Naive thymus-derived CD4-positive, alpha-beta T cell (primary cell): ENCODE measurements at regions of chr4 and their contacts with region 1.

Region 1: GRCh38 chr4:88533937-88534750 is 10.6 kb upstream of the PYURF start:
- DNase-seq: no peak
- ATAC-seq: no peak
- H3K4me3 ChIP-seq: no peak overlapping the region
- H3K4me3 Mint-ChIP-seq: no peak overlapping the region
- H3K27ac ChIP-seq: no peak overlapping the region
- H3K27ac Mint-ChIP-seq: no peak overlapping the region
- H3K4me1 ChIP-seq: no peaks in the 10 kb centered on the region
- H3K4me1 Mint-ChIP-seq: no peaks in the 10 kb centered on the region
- H3K27me3 ChIP-seq: no peaks in the 10 kb centered on the region
- H3K27me3 Mint-ChIP-seq: no peaks in the 10 kb centered on the region

Region 2: GRCh38 chr4:88429401-88429800 is 104.7 kb before region 1 on chr4:
- CTCF ChIA-PET with region 1: no interaction called
- POLR2A ChIA-PET with region 1: no interaction called
- intact Hi-C with region 1: no loop called
- DNase-seq: no peak
- ATAC-seq: no peak
- H3K4me3 ChIP-seq: no peak overlapping the region
- H3K4me3 Mint-ChIP-seq: no peak overlapping the region
- H3K27ac ChIP-seq: no peak overlapping the region
- H3K27ac Mint-ChIP-seq: peak overlapping the region in 1 of 9 donors; percentile 63
- H3K4me1 ChIP-seq: no peaks in the 10 kb centered on the region
- H3K4me1 Mint-ChIP-seq: peaks cover 0 to 6% (median 0%) of the 10 kb centered on the region in 7 donors
- H3K27me3 ChIP-seq: no peaks in the 10 kb centered on the region
- H3K27me3 Mint-ChIP-seq: no peaks in the 10 kb centered on the region

Region 3: DNA sequence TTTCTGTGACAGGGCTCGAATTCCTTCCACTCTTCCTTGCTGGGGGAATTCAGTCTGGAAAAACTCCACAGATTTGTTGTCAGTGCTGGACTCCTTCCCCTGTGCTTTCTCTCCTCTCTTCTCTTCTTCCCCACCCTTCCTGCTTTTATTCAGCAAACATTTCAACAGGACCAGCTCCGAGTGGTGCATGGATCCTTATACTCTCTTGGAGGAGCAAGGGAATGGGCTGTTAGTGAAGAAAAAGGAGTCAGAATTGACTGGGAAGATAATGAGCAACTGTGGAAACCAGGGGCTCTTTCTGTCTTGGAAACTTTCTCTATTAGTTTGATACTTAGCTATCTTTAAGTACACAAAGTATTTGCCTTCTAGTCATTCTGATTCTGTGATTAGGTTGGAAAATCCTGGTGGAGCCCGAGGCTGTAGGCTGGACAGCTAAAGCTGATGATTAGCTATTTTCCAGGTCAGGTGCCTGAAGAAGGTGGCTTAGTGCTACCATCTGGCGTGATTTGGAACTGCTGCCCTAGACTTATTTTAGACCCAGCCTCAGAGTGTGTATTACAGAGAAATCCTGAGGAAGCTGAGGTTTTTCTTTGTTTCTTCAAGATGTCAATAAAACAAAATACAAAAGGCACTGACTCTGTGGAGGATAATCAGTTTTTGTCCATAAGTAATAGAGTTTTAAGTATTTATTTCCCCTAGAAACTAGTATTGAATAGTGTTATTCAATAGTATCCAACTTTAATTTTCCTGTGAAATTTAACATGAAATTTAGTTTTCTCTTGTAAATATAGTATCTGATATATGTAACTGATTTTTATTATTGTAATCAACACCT is 125.1 kb after region 1 on chr4:
- CTCF ChIA-PET with region 1: interaction called, 37 read pairs
- POLR2A ChIA-PET with region 1: interaction called, 4 read pairs
- intact Hi-C with region 1: loop called (anchors 1 kb)
- DNase-seq: peak in 7 of 9 donors; percentile 23 to 53 (median 44)
- ATAC-seq: peak; percentile 75
- H3K4me3 ChIP-seq: no peak overlapping the region
- H3K4me3 Mint-ChIP-seq: no peak overlapping the region
- H3K27ac ChIP-seq: no peak overlapping the region
- H3K27ac Mint-ChIP-seq: peak overlapping the region in 6 of 9 donors; percentile 5 to 86 (median 41)
- H3K4me1 ChIP-seq: no peaks in the 10 kb centered on the region
- H3K4me1 Mint-ChIP-seq: peaks cover 8 to 39% (median 24%) of the 10 kb centered on the region in 7 donors
- H3K27me3 ChIP-seq: no peaks in the 10 kb centered on the region
- H3K27me3 Mint-ChIP-seq: no peaks in the 10 kb centered on the region

Region 4: DNA sequence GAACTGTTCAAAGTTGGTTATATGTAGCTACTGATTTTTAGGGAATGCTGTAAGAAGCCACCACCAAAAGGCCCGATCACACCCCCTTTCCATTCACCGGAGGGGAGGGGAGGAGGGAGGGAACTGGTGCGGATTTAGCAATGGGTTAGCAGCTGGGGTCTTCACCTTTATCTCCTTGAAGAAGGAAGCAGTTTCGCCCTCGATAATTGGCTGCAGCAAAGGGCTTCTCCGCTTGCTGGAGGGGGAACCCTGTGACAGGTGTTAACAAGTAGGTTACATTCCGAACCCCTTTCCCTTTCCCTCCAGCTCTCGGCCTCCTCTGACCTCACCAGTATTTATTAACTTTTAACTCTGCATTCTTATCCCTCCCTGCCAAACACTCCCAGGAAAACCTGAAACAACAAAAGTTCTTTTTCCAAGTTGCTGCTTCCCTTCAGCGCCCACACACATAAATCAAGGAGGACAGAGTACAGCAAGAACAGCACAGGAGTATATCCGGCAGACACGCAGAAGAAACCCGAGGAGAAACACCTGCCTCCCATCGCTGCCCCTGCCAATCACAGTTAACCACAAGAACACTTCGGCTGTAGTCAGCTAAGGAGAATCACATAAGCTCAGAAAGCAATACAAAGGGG is 203.3 kb after region 1 on chr4:
- CTCF ChIA-PET with region 1: no interaction called
- POLR2A ChIA-PET with region 1: no interaction called
- intact Hi-C with region 1: loop called in 1 of 2 experiments (anchors 2 kb)
- DNase-seq: peak in 7 of 9 donors; percentile 54 to 74 (median 66)
- ATAC-seq: peak; percentile 90
- H3K4me3 ChIP-seq: no peak overlapping the region
- H3K4me3 Mint-ChIP-seq: peak overlapping the region in 9 of 10 donors; percentile 31 to 85 (median 76)
- H3K27ac ChIP-seq: peak overlapping the region; percentile 48
- H3K27ac Mint-ChIP-seq: peak overlapping the region in 8 of 9 donors; percentile 69 to 90 (median 85)
- H3K4me1 ChIP-seq: peaks cover 0 to 19% of the 10 kb centered on the region in 2 donors
- H3K4me1 Mint-ChIP-seq: peaks cover 9 to 49% (median 37%) of the 10 kb centered on the region in 7 donors
- H3K27me3 ChIP-seq: no peaks in the 10 kb centered on the region
- H3K27me3 Mint-ChIP-seq: no peaks in the 10 kb centered on the region

Region 5: DNA sequence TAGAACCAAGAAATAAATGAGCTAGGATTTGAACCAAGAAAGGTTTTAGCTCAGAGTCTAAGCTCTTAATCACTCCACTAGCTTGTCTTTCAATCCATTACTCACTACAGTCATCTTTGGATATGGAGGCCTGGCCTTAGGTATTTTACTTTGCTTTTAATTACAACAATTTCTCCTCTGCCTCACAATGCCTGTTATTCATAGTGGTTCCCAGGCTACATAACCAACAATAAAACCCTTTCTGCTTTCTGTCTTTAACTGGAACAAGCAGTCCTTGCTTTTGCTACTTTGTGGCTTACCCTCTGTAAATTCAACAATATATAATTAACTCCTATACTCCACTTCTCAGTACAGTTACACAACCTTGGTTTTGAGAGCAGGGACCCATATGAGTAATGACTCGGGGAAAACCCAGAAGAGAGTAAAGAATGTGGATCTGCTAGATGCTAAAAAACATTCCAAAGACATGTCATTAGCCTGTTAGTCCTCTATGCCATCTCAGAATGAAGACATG is 258.2 kb after region 1 on chr4:
- CTCF ChIA-PET with region 1: interaction called, 3 read pairs
- POLR2A ChIA-PET with region 1: no interaction called
- intact Hi-C with region 1: loop called (anchors 1 to 5 kb)
- DNase-seq: no peak
- ATAC-seq: peak; percentile 44
- H3K4me3 ChIP-seq: no peak overlapping the region
- H3K4me3 Mint-ChIP-seq: no peak overlapping the region
- H3K27ac ChIP-seq: no peak overlapping the region
- H3K27ac Mint-ChIP-seq: peak overlapping the region in 2 of 9 donors; percentile 3 to 60
- H3K4me1 ChIP-seq: no peaks in the 10 kb centered on the region
- H3K4me1 Mint-ChIP-seq: peaks cover 0 to 42% (median 4%) of the 10 kb centered on the region in 7 donors
- H3K27me3 ChIP-seq: no peaks in the 10 kb centered on the region
- H3K27me3 Mint-ChIP-seq: peaks cover 0 to 14% (median 0%) of the 10 kb centered on the region in 5 donors